ENCODE measurements at regions of chr3 and their contacts with region 1.

Region 1: GRCh38 chr3:101573449-101574387 is at the start of gene PCNP:
- DNase-seq: peak; percentile 98
- H3K4me3 ChIP-seq: peak within 1 kb of the TSS; percentile 76
- H3K4me3 Mint-ChIP-seq: peak within 1 kb of the TSS; percentile 96
- H3K27ac Mint-ChIP-seq: peak within 1 kb of the TSS; percentile 99
- H3K4me1 ChIP-seq: peaks cover 26% of the 10 kb centered on the region
- H3K4me1 Mint-ChIP-seq: peaks cover 12% of the 10 kb centered on the region
- H3K27me3 ChIP-seq: no peaks in the 10 kb centered on the region
- H3K27me3 Mint-ChIP-seq: no peaks in the 10 kb centered on the region
- CTCF ChIP-seq: peak; percentile 68 to 80
- total RNA-seq, gene PCNP: 128 and 141 TPM in 2 replicates

Region 2: GRCh38 chr3:101512646-101513418 is 60.9 kb before region 1 on chr3 and contains the start of gene SENP7:
- CTCF ChIA-PET with region 1: interaction called, 3 read pairs
- POLR2A ChIA-PET with region 1: interaction called, 10 read pairs
- intact Hi-C with region 1: loop called (anchors 1 kb)
- DNase-seq: peak; percentile 81 to 82
- H3K4me3 ChIP-seq: peak within 1 kb of the TSS; percentile 54
- H3K4me3 Mint-ChIP-seq: peak within 1 kb of the TSS; percentile 90
- H3K27ac Mint-ChIP-seq: peak within 1 kb of the TSS; percentile 77
- H3K4me1 ChIP-seq: peaks cover 11% of the 10 kb centered on the region
- H3K4me1 Mint-ChIP-seq: peaks cover 6% of the 10 kb centered on the region
- H3K27me3 ChIP-seq: no peaks in the 10 kb centered on the region
- H3K27me3 Mint-ChIP-seq: no peaks in the 10 kb centered on the region
- CTCF ChIP-seq: no peak
- total RNA-seq, gene SENP7: 7.6 and 8.5 TPM in 2 replicates

Region 3: DNA sequence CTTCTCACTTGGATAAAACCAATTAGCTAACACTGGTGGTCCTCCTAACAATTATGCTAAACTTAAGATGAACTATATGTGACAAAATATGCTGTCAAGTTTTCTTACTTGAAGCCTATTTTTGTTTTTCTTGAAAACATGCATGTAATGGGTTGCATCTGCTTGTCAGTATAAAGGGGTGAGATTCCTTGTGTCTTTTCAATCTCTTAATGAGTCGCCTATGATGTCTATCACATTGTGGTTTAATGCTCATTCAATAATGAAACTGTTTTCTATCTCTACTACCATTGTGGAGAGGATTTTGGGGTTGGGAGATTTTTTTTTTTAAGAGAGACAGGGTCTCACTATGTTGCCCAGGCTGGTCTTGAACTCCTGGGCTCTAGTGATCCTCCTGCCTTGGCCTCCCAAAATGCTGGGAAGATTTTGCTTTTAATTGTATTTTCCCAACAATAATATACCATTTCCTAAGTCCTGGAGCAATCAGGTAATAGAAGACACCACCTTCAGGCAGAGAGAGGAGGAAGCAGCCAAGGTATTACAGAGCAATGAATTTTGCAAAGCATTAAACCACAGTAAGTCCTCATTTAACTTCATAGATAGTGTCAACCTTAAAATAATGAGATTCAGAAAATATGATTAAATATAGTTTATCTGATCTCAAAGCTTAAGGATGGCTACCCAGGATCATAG is 29.4 kb before region 1 on chr3:
- CTCF ChIA-PET with region 1: no interaction called
- POLR2A ChIA-PET with region 1: interaction called, 14 read pairs
- intact Hi-C with region 1: loop called (anchors 1 kb)
- DNase-seq: no peak
- H3K4me3 ChIP-seq: no peak overlapping the region
- H3K4me3 Mint-ChIP-seq: no peak overlapping the region
- H3K27ac Mint-ChIP-seq: no peak overlapping the region
- H3K4me1 ChIP-seq: peaks cover 12% of the 10 kb centered on the region
- H3K4me1 Mint-ChIP-seq: peaks cover 15% of the 10 kb centered on the region
- H3K27me3 ChIP-seq: no peaks in the 10 kb centered on the region
- H3K27me3 Mint-ChIP-seq: no peaks in the 10 kb centered on the region
- CTCF ChIP-seq: peak in 1 of 2 experiments; percentile 4

Region 4: DNA sequence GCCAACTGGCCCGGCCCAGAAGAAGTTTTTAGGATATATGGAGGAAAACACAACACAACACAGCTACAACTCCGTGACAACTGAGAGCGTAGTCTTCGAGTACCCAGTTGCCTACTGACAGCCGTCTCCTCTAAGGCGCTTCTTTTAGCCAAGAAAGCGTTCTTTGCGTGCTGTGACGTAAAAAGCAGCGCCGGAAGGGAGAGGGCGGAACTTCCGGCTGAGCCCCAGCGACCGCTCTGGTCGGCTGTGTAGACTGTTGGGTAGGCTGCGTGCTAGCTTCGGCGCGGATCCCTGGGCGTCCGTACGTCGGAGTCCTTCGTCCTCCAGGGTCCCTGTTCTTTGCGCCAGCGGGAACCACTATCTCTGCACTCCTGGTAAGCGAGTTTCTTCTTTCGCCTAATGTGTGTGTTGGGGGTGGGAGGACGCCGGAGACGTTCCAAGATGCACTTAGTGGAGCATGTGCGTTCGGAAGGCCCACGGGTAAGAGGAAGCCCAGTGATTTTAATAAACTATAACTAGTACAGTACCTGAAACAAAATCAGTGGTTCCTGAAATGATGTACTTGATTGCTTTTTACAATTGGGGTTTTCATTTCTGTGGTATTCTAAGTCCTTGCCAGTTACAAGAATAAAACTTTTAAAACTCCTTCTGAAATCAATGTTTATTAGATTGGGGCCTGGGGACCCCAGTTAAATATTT is 11.9 kb before region 1 on chr3 and contains the start of gene TRMT10C:
- CTCF ChIA-PET with region 1: no interaction called
- POLR2A ChIA-PET with region 1: interaction called, 34 read pairs
- intact Hi-C with region 1: loop called (anchors 1 kb)
- DNase-seq: peak; percentile 91
- H3K4me3 ChIP-seq: peak within 1 kb of the TSS; percentile 91
- H3K4me3 Mint-ChIP-seq: peak within 1 kb of the TSS; percentile 83
- H3K27ac Mint-ChIP-seq: peak within 1 kb of the TSS; percentile 87
- H3K4me1 ChIP-seq: no peaks in the 10 kb centered on the region; the same call in 1 of the 2 replicates
- H3K4me1 Mint-ChIP-seq: no peaks in the 10 kb centered on the region
- H3K27me3 ChIP-seq: no peaks in the 10 kb centered on the region
- H3K27me3 Mint-ChIP-seq: no peaks in the 10 kb centered on the region
- CTCF ChIP-seq: no peak
- total RNA-seq, gene TRMT10C: 25.7 and 28.1 TPM in 2 replicates

Region 5: GRCh38 chr3:101635954-101636798 is 62.5 kb after region 1 on chr3:
- CTCF ChIA-PET with region 1: interaction called, 3 read pairs
- POLR2A ChIA-PET with region 1: no interaction called
- intact Hi-C with region 1: loop called (anchors 1 kb)
- DNase-seq: peak; percentile 54 to 72
- H3K4me3 ChIP-seq: no peak overlapping the region
- H3K4me3 Mint-ChIP-seq: no peak overlapping the region
- H3K27ac Mint-ChIP-seq: no peak overlapping the region
- H3K4me1 ChIP-seq: peaks cover under 1% of the 10 kb centered on the region; the same call in 1 of the 2 replicates
- H3K4me1 Mint-ChIP-seq: peaks cover 11% of the 10 kb centered on the region
- H3K27me3 ChIP-seq: no peaks in the 10 kb centered on the region
- H3K27me3 Mint-ChIP-seq: peaks cover 7% of the 10 kb centered on the region
- CTCF ChIP-seq: peak; percentile 51 to 55

Region 6: DNA sequence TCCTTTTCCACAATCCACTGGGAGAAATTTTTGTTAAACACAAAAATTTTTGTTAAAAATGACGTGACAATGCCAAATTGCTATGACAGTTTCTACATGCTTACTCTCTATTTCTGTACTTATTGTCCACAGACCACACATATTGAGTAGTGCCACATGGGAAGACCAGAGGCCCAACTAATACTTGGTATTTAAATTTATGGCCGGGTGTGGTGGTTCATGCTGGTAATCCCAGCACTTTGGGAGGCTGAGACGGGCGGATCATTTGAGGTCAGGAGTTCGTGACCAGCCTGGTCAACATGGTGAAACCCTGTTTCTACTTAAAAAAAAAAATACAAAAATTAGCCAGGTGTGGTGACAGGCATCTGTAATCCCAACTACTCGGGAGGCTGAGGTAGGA is 82.9 kb after region 1 on chr3:
- CTCF ChIA-PET with region 1: no interaction called
- POLR2A ChIA-PET with region 1: no interaction called
- intact Hi-C with region 1: no loop called
- DNase-seq: no peak
- H3K4me3 ChIP-seq: no peak overlapping the region
- H3K4me3 Mint-ChIP-seq: no peak overlapping the region
- H3K27ac Mint-ChIP-seq: no peak overlapping the region
- H3K4me1 ChIP-seq: no peaks in the 10 kb centered on the region
- H3K4me1 Mint-ChIP-seq: no peaks in the 10 kb centered on the region
- H3K27me3 ChIP-seq: no peaks in the 10 kb centered on the region
- H3K27me3 Mint-ChIP-seq: no peaks in the 10 kb centered on the region
- CTCF ChIP-seq: no peak

Region 7: GRCh38 chr3:101676765-101677435 is 103.2 kb after region 1 on chr3 and contains the start of gene ZBTB11:
- CTCF ChIA-PET with region 1: interaction called, 6 read pairs
- POLR2A ChIA-PET with region 1: interaction called, 15 read pairs
- intact Hi-C with region 1: loop called (anchors 1 kb)
- DNase-seq: peak; percentile 98 to 99
- H3K4me3 ChIP-seq: peak within 1 kb of the TSS; percentile 99
- H3K4me3 Mint-ChIP-seq: peak within 1 kb of the TSS; percentile 81
- H3K27ac Mint-ChIP-seq: peak within 1 kb of the TSS; percentile 95
- H3K4me1 ChIP-seq: peaks cover 7% of the 10 kb centered on the region; the same call in 1 of the 2 replicates
- H3K4me1 Mint-ChIP-seq: peaks cover 7% of the 10 kb centered on the region
- H3K27me3 ChIP-seq: no peaks in the 10 kb centered on the region
- H3K27me3 Mint-ChIP-seq: no peaks in the 10 kb centered on the region
- CTCF ChIP-seq: peak; percentile 48 to 70
- total RNA-seq, gene ZBTB11: 16.4 and 18.0 TPM in 2 replicates

Region 8: DNA sequence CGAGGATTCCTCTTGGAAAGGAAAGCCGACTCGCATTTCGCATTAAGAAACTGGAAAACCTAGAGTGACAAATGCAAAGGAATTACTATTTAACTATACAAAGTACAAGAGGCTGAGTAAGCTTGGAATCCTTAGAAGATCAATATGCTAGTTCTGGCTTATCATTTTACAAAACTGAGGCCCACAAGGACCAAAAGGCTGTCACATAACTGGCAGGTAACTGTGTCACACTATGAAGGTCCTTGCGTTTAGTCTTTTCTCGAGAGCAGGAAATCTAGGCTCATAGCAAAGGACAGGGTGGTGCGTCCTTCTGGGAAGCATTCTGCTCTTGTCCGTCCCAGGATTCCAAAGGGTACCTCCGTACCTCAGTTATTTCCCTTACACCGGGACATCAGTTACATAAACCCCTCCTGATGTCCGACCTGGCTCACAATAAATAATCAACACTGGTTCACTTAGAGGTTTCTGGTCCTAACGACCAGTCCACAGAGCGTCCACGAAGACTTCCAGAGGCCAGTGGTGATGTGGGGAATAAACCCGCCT is 112.2 kb after region 1 on chr3:
- CTCF ChIA-PET with region 1: no interaction called
- POLR2A ChIA-PET with region 1: interaction called, 3 read pairs
- intact Hi-C with region 1: loop called (anchors 1 kb)
- DNase-seq: no peak
- H3K4me3 ChIP-seq: peak overlapping the region; percentile 79
- H3K4me3 Mint-ChIP-seq: peak overlapping the region; percentile 89
- H3K27ac Mint-ChIP-seq: peak overlapping the region; percentile 98
- H3K4me1 ChIP-seq: peaks cover 4% of the 10 kb centered on the region; the same call in 1 of the 2 replicates
- H3K4me1 Mint-ChIP-seq: peaks cover 14% of the 10 kb centered on the region
- H3K27me3 ChIP-seq: no peaks in the 10 kb centered on the region
- H3K27me3 Mint-ChIP-seq: no peaks in the 10 kb centered on the region
- CTCF ChIP-seq: no peak